ENCODE measurements at regions of chr1 and their contacts with region 1.

Region 1: DNA sequence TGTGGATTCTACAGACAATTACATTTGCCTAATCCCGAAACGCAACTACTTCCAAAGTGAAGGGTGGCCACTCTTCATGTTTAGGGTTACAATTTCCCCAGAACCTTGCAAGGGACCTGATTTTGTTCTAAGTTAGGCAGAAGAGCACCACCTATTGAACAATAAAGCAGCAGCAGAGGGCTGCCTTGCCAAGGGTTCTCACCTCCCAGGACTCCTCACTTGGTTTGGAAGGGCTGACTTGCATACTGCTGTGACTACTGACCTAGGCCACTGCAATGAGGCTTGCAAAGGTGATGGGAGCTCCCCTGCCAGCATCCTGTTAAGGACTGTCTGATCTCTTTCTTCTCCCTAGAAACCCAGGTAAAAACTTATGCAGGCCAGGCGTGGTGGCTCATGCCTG is 14.2 kb downstream of the MTOR start:
- H3K4me3 Mint-ChIP-seq: no peak overlapping the region
- H3K27ac Mint-ChIP-seq: no peak overlapping the region
- H3K4me1 Mint-ChIP-seq: no peaks in the 10 kb centered on the region
- H3K27me3 Mint-ChIP-seq: no peaks in the 10 kb centered on the region

Region 2: DNA sequence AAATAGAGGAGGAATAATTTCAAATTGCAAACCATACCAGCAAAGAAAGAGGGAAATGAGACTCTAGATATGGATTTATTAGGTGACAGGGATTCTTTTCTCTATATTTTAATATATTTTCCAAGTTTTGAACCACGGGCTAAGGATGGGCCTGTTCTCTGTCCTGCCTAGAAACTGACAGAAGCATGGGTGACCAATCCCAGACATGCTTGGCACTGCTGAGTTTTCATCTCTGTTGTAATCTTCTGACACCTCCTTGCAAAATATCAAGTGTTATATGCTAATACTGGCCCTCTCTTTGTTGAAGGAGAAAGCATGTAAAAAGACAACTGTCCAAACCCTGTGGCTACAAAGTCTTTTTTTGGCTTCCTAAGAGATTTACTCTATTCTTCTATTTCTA is 59.8 kb before region 1 on chr1:
- intact Hi-C with region 1: no loop called
- H3K4me3 Mint-ChIP-seq: no peak overlapping the region
- H3K27ac Mint-ChIP-seq: no peak overlapping the region
- H3K4me1 Mint-ChIP-seq: no peaks in the 10 kb centered on the region
- H3K27me3 Mint-ChIP-seq: no peaks in the 10 kb centered on the region

Region 3: DNA sequence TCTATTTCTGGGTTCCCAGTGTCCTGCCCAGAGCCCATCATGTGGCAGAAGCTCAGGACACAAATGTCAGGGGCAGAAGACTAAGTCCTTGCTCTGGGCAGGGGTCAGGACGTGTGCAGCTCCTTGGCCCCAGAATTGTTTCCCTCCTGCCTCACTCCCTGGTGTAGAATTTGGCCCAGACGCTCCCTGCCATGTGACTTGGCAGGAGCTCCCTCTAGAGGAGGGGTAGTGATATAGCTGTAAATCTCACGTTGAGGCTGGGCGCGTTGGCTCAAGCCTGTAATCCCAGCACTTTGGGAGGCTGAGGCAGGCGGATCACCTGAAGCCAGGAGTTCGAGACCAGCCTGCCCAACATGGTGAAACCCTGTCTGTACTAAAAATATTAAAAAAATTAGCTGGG is 116.0 kb after region 1 on chr1:
- intact Hi-C with region 1: loop called (anchors 5 kb)
- H3K4me3 Mint-ChIP-seq: no peak overlapping the region
- H3K27ac Mint-ChIP-seq: no peak overlapping the region
- H3K4me1 Mint-ChIP-seq: no peaks in the 10 kb centered on the region
- H3K27me3 Mint-ChIP-seq: no peaks in the 10 kb centered on the region